ENCODE measurements at regions of chr1 and their contacts with region 1.

Region 1: GRCh38 chr1:222329493-222330045 is 218.3 kb downstream of the HHIPL2 start:
- DNase-seq: no peak
- ATAC-seq: no peak
- H3K4me3 ChIP-seq: no peak overlapping the region
- H3K27ac ChIP-seq: no peak overlapping the region
- H3K4me1 ChIP-seq: no peaks in the 10 kb centered on the region
- H3K27me3 ChIP-seq: peaks cover 0 to 3% (median 0%) of the 10 kb centered on the region in 3 donors
- CTCF ChIP-seq: no peak

Region 2: DNA sequence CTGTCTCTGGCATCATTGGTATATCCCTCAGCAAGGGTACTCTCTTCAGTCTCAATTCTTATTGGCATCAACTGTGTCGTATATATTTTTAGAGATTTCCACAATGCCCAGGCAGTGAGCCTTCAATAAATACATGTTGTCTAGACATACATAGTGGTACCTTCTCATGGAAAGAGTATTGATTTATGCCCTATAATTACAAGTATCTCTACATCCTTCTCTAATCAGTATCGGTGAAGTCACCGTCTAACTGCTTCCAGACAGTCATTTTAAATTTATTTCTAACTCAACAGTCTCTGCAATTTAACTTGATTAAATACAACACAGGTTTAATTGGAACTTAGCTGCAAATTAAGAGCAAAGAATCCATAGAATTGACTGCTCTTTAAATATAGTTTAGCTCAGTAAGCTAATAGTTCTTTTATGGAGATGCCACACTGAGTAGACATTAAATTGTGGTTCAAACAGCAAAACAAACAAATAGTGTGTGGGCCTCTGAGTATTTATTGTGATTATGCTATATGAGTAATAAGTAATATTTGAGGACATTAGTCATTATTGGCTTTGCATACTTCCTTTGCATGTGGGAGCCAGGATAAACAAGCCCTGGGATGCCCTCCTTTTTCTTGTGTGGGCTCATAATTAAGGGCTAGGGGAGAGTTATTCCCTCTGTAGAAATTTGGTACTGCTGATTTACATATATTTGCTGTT is 460.8 kb before region 1 on chr1:
- intact Hi-C with region 1: no loop called
- DNase-seq: no peak
- ATAC-seq: no peak
- H3K4me3 ChIP-seq: no peak overlapping the region
- H3K27ac ChIP-seq: no peak overlapping the region
- H3K4me1 ChIP-seq: peaks cover under 1% of the 10 kb centered on the region
- H3K27me3 ChIP-seq: no peaks in the 10 kb centered on the region
- CTCF ChIP-seq: no peak

Region 3: DNA sequence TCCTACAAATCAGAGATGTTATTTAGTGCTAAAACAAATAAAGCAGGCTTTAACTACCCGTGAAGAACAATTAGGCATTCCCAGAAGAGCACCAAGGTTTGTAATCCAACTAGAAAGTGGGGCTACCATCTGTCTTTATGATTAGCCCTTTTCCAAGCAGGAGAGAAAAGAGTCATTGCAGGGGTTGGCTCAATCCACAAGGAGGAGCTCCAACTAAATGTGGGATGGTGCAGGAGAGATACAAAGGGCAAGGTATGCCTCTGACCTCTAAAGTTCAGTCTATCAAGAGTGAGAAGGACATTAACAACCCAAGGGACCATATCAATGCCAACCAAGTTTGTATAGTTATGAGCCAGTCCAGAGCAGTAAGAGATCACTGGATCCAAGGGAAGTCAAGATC is 205.0 kb before region 1 on chr1:
- intact Hi-C with region 1: no loop called
- DNase-seq: no peak
- ATAC-seq: no peak
- H3K4me3 ChIP-seq: no peak overlapping the region
- H3K27ac ChIP-seq: no peak overlapping the region
- H3K4me1 ChIP-seq: no peaks in the 10 kb centered on the region
- H3K27me3 ChIP-seq: no peaks in the 10 kb centered on the region
- CTCF ChIP-seq: no peak

Region 4: DNA sequence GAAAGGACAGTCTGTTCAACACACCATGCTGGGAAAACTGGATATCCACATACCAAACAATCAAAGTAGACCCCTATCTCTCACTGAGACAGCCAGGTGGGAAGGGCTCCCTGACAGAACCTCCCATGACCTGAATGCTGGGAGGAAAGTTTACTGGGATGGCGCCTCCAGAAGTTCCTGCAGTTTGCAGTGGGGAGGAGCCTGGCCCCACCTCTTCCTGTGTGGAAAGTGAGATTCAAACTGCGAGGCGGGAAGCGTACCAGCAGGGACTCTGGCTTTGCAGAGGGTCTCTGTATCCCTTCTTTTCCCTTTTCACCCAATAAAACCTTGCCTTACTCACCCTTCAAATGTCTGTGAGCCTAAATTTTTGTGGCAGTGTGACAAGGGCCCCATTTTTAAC is 27.7 kb after region 1 on chr1:
- intact Hi-C with region 1: loop called in 1 of 2 experiments (anchors 5 kb)
- DNase-seq: no peak
- ATAC-seq: no peak
- H3K4me3 ChIP-seq: no peak overlapping the region
- H3K27ac ChIP-seq: no peak overlapping the region
- H3K4me1 ChIP-seq: no peaks in the 10 kb centered on the region
- H3K27me3 ChIP-seq: no peaks in the 10 kb centered on the region
- CTCF ChIP-seq: no peak